CD8-positive, alpha-beta memory T cell (primary cell): ENCODE measurements at regions of chr21 and their contacts with region 1.

Region 1: DNA sequence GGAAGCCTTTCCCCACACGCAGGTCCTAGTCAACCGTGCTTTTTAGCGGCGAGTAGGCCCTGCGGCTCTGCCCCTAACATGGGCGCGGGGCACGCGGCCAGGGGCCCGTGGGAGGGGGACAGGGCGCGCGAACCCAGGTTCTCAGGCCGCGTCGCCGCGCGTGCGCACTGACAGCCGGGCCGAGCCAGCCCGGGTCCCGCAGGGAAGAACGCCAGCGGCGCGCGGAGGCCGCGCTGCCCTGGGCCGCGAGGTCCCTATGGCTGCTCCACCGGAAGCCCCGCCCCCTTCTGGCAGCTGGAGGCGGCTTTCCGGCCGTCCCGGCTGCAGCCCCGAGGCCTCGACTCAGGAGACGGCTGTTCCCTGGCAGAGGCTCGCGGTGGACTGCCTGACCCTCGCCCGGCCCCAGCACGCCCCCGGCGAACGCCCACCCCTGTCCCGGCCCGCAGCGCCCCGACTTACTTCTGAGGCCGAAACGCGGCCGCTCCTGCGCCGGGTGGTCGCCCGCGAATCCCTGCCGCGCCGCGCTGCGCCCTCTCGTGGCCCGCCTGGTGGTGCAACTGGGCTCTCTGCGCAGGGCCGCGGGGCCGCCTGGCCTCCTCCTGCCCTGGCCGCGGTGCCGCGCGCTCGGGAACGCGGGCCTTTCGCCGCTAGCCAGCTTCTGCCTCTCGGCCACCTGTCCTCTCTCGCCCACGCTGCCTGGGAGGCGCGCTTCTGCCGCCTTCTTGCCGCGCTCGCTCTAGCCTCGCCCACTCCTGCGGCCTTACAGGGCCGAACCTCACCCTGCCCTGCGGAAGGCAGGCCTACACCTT is 16.6 kb upstream of the RIPPLY3 start:
- DNase-seq: peak; percentile 79 to 90 (median 83)
- H3K4me3 ChIP-seq: peak overlapping the region; percentile 49
- H3K4me3 Mint-ChIP-seq: peak overlapping the region; percentile 81 to 96 (median 87)
- H3K27ac ChIP-seq: peak overlapping the region; percentile 62
- H3K27ac Mint-ChIP-seq: peak overlapping the region; percentile 46 to 96 (median 88)
- H3K4me1 ChIP-seq: no peaks in the 10 kb centered on the region
- H3K4me1 Mint-ChIP-seq: peaks cover 15 to 31% (median 21%) of the 10 kb centered on the region in 3 donors
- H3K27me3 ChIP-seq: no peaks in the 10 kb centered on the region
- H3K27me3 Mint-ChIP-seq: no peaks in the 10 kb centered on the region

Region 2: DNA sequence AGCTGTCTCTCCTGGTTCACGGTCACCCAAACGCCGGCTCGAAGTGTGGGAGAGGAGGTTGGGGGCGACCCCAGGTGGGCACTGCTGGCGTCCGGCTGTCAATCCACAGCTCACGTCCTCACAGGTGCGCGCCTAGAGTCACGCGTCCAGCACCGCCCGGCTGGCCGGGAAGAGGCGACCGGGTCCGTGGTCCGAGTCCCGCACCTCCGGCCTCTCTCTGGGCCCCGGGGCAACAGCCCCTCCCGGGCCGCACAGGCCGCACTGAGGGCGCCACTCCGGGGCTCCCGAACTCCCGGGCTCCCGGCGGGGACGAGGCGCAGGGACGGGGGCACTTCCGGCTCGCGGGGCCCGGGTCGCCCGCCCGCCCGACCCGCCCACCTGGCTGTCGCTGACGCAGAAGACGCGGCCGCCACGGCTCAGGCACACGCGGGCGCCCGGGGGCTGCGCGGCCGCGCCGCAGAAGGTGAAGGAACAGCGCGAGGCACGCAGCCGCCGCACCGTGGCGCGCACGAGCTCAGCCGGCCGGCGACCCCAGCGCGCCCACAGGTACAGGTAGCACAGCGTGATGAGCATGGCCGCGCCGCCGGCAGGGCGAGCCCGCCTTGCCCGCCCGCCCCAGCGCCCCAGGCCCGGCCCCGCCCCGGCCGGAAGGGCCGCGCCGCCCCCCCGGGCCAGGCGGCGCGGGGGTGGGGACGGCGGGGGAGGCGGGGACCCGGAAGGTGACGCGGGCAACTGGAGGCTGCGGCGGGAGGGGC is 23.7 kb before region 1 on chr21 and contains the start of gene HLCS:
- CTCF ChIA-PET with region 1: interaction called, 24 read pairs
- POLR2A ChIA-PET with region 1: interaction called, 7 read pairs
- DNase-seq: peak; percentile 62 to 81 (median 75)
- H3K4me3 ChIP-seq: peak within 1 kb of the TSS; percentile 63
- H3K4me3 Mint-ChIP-seq: peak within 1 kb of the TSS; percentile 84 to 98 (median 88)
- H3K27ac ChIP-seq: peak within 1 kb of the TSS; percentile 76
- H3K27ac Mint-ChIP-seq: peak within 1 kb of the TSS; percentile 82 to 95 (median 92)
- H3K4me1 ChIP-seq: peaks cover 7% of the 10 kb centered on the region
- H3K4me1 Mint-ChIP-seq: peaks cover 13 to 22% (median 22%) of the 10 kb centered on the region in 3 donors
- H3K27me3 ChIP-seq: no peaks in the 10 kb centered on the region
- H3K27me3 Mint-ChIP-seq: no peaks in the 10 kb centered on the region
- total RNA-seq, gene HLCS: 13.4 to 14.7 TPM

Region 3: DNA sequence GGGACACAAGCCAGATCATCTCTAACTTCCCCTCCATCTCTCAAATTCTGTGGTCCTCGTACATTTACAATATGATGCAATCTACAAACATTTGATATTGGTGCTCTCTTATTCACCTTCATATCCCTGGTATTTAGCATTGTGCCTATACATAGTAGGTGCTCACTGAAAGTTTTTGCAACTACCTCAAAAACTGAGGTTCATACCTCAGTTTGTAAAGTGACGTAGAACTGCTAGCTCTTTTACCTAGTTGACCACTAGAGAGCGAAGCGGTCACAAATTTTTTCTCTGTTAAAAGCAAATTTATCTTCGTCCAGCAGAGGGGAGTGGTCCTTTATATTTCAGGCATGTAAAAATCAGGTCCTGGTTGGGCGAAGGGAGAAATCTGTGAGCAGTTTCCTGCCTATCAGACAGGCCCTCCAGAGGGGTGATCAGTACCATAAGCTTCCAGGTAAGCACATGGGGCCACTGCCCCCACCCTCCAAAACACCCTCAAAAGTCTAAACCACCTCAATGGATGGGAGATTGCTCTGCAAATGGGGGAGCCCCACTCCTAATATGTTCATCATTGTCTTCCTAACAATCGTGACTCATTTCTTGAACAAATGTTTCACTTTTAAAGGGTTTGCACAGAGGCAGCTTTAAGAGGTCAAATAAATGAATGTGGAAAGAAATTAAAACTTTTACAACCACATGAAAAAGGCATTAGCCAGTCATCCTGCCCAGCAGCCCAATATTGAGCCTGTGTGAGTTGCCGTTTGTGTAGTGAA is 12.8 kb before region 1 on chr21:
- CTCF ChIA-PET with region 1: interaction called, 44 read pairs
- POLR2A ChIA-PET with region 1: interaction called, 6 read pairs
- DNase-seq: peak; percentile 3 to 62 (median 35)
- H3K4me3 ChIP-seq: no peak overlapping the region
- H3K4me3 Mint-ChIP-seq: peak overlapping the region in 4 of 7 donors; percentile 1 to 63 (median 38)
- H3K27ac ChIP-seq: no peak overlapping the region
- H3K27ac Mint-ChIP-seq: peak overlapping the region in 4 of 8 donors; percentile 71 to 86 (median 78)
- H3K4me1 ChIP-seq: no peaks in the 10 kb centered on the region
- H3K4me1 Mint-ChIP-seq: peaks cover 15 to 24% (median 20%) of the 10 kb centered on the region in 3 donors
- H3K27me3 ChIP-seq: no peaks in the 10 kb centered on the region
- H3K27me3 Mint-ChIP-seq: no peaks in the 10 kb centered on the region

Region 4: DNA sequence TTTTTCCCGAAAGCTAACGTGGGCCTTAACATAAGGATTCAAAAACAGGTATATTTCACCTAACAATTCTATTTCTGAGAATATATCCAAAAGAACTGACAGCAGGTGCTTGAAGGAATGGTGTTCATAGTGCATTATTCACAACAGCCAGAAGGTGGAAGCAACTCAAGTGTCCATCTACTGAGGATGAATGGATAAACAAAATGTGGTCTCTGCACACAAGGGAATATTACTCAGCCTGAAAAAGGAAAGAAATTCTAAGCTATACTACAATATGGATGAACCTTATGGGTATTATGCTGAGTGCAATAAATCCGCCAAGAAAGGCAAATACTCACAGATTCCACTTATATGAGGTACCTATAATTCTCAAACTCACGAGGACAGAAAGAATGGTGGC is 10.5 kb after region 1 on chr21:
- CTCF ChIA-PET with region 1: interaction called, 23 read pairs
- POLR2A ChIA-PET with region 1: no interaction called
- DNase-seq: no peak
- H3K4me3 ChIP-seq: no peak overlapping the region
- H3K4me3 Mint-ChIP-seq: no peak overlapping the region
- H3K27ac ChIP-seq: no peak overlapping the region
- H3K27ac Mint-ChIP-seq: no peak overlapping the region
- H3K4me1 ChIP-seq: peaks cover 5% of the 10 kb centered on the region
- H3K4me1 Mint-ChIP-seq: peaks cover 7 to 8% (median 8%) of the 10 kb centered on the region in 3 donors
- H3K27me3 ChIP-seq: no peaks in the 10 kb centered on the region
- H3K27me3 Mint-ChIP-seq: peaks cover 0 to 2% of the 10 kb centered on the region in 2 donors

Region 5: GRCh38 chr21:37009740-37010341 is 19.9 kb after region 1 on chr21:
- CTCF ChIA-PET with region 1: interaction called, 21 read pairs
- POLR2A ChIA-PET with region 1: interaction called, 3 read pairs
- DNase-seq: peak; percentile 64 to 82 (median 65)
- H3K4me3 ChIP-seq: no peak overlapping the region
- H3K4me3 Mint-ChIP-seq: peak overlapping the region; percentile 55 to 87 (median 66)
- H3K27ac ChIP-seq: no peak overlapping the region
- H3K27ac Mint-ChIP-seq: no peak overlapping the region
- H3K4me1 ChIP-seq: peaks cover 6% of the 10 kb centered on the region
- H3K4me1 Mint-ChIP-seq: peaks cover 8 to 13% (median 13%) of the 10 kb centered on the region in 3 donors
- H3K27me3 ChIP-seq: peaks cover 3% of the 10 kb centered on the region
- H3K27me3 Mint-ChIP-seq: peaks cover 25 to 44% of the 10 kb centered on the region in 2 donors